ENCODE measurements at regions of chr13 and their contacts with region 1.

Region 1: DNA sequence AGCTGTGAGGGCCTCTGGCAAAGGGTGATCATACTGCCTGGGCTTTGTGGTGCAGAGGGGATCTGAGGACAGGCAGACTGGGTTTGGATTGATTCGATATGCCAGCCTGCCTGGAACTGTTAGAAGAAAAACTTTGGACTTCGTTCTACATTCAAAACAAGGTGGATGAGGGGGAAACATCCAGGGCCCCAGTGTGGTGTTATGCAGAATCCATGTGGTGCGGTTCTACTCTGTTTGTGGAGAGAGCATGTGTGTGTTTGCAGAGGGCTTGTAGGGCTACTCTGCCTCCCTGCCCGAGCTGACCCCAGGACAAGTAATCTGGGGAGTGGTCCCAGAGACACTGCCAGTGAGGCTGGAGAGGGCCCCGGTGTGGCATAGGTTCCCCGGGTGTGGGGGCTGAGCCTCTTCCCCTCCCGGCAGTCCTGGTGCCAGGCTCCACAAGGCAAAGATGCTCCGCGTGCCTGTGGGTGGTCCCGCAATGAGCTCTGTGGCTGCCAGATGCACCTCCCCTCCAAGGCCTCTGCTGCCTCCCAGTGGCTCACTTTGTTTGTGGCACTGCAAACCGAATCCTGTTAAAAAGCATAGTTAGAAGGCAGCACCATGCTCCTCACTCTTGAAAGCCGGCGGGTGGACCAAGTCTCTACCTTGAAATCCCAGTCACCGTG is 22.3 kb upstream of the TFDP1 start:
- DNase-seq: peak in 4 of 5 donors; percentile 54 to 77 (median 68)
- ATAC-seq: peak; percentile 38 to 87 (median 76)
- H3K4me3 ChIP-seq: no peak overlapping the region
- H3K27ac ChIP-seq: no peak overlapping the region
- H3K4me1 ChIP-seq: peaks cover 0 to 6% (median 0%) of the 10 kb centered on the region in 12 donors
- H3K27me3 ChIP-seq: no peaks in the 10 kb centered on the region
- CTCF ChIP-seq: peak; percentile 56 to 85 (median 76)
- POLR2A ChIP-seq: no peak

Region 2: GRCh38 chr13:113275387-113275786 is 286.8 kb before region 1 on chr13:
- intact Hi-C with region 1: loop called in 1 of 10 experiments (anchors 5 kb)
- DNase-seq: peak in 1 of 5 donors; percentile 36
- ATAC-seq: peak in 3 of 4 donors; percentile 39 to 72 (median 50)
- H3K4me3 ChIP-seq: no peak overlapping the region
- H3K27ac ChIP-seq: no peak overlapping the region
- H3K4me1 ChIP-seq: peaks cover 0 to 35% (median 0%) of the 10 kb centered on the region in 12 donors
- H3K27me3 ChIP-seq: no peaks in the 10 kb centered on the region
- CTCF ChIP-seq: peak in 10 of 12 donors; percentile 20 to 55 (median 42)
- POLR2A ChIP-seq: no peak

Region 3: GRCh38 chr13:113383089-113383488 is 179.1 kb before region 1 on chr13:
- intact Hi-C with region 1: no loop called
- DNase-seq: no peak
- ATAC-seq: no peak
- H3K4me3 ChIP-seq: no peak overlapping the region
- H3K27ac ChIP-seq: no peak overlapping the region
- H3K4me1 ChIP-seq: peaks cover 0 to 6% (median 0%) of the 10 kb centered on the region in 12 donors
- H3K27me3 ChIP-seq: peaks cover 0 to 5% (median 0%) of the 10 kb centered on the region in 9 donors
- CTCF ChIP-seq: no peak
- POLR2A ChIP-seq: no peak

Region 4: DNA sequence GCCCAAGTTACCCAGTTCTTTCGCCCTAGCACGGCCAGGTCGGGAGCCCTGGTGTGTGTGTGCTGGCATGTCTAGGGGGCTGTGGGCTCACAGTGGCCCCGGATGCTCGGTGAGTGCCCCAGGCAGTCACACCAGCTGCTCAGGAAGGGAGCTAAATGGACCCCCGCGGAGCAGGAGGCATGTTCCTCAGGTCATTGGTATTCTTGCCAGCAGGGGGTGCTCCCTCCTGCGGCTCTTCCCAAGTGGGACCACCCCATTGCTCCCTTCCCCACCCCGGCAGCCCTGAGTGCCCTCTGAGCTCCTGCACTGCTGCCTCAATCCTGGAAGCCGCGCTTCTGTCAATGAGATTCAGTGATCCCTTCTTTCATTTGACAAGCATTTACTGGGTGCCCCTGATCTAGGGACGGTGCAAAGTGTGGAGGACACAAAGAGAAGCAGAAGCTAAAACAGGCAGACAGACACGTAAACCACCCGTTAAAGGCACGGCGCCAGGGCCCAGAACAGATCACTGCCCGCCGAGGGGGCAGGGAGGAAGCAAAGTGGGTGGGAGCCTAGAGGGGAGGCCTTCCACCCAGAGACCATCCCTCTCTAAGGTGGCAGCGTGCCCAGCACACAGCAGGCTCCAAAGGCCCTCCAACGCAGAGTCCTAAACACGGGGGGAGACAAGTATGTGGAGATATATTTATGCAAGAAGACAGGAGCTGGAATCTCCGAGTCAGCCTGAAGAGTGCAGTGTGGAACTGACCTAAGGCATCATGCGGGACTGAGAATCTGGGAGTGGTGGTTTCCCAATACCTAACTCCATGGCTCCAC is 103.8 kb before region 1 on chr13:
- intact Hi-C with region 1: loop called in 9 of 10 experiments (anchors 1 to 5 kb)
- DNase-seq: peak in 4 of 5 donors; percentile 56 to 67 (median 62)
- ATAC-seq: peak; percentile 54 to 66 (median 62)
- H3K4me3 ChIP-seq: no peak overlapping the region
- H3K27ac ChIP-seq: peak overlapping the region in 11 of 12 donors; percentile 25 to 75 (median 60)
- H3K4me1 ChIP-seq: peaks cover 0 to 47% (median 12%) of the 10 kb centered on the region in 12 donors
- H3K27me3 ChIP-seq: no peaks in the 10 kb centered on the region
- CTCF ChIP-seq: peak; percentile 31 to 57 (median 41)
- POLR2A ChIP-seq: no peak